Activated B cell treated with CpG ODN at 0.5 μM for 24 hours (primary cell): ENCODE measurements at regions of chr6 and their contacts with region 1.

Region 1: DNA sequence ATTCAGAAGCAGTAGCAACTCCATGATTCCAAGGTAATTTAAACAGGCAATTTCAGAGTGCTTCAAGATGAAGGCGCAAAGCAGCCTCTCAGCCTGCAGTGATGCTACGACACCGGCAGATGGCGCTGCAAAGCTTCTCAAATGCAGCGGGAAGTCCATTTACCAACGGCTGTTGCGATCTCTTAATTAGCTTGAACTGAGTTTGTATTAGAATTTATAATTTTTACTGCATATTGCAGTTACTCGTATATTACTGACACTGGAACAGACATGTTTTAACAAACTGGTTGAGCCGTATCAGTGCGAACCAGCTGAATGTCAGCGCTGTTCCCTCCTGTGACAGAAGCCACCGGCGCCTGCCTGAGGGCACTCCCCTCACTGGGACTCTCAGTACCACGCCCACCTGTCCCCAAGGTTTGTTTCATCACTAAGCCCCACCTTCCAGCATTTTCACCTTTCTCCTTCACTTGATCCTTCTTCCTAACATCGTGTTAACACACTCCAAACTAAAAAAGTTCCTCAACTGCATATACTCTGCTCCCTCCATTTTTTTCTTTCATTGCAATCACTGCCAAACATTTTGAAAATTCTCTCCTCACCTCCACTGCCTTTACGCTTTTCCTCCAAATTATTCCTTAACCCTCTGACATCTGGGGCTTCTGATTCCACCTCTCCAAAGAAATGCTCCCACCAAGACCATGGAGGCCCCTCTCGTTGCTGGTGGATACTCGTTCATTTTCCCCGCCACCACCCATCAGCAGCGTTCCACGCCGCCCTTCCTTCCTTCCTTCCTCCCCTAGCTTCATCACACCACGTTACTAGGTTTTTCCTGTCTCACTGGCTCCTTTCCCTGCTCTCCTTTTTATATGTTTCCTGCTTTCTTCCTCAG is 14.5 kb downstream of the GNL1 start:
- DNase-seq: peak; percentile 65
- ATAC-seq: peak; percentile 84
- H3K4me3 Mint-ChIP-seq: peak overlapping the region; percentile 81
- H3K27ac Mint-ChIP-seq: peak overlapping the region; percentile 81
- H3K4me1 Mint-ChIP-seq: peaks cover 30% of the 10 kb centered on the region
- H3K27me3 Mint-ChIP-seq: no peaks in the 10 kb centered on the region
- CTCF ChIP-seq: peak; percentile 98

Region 2: GRCh38 chr6:30418448-30418847 is 123.3 kb before region 1 on chr6:
- CTCF ChIA-PET with region 1: no interaction called
- POLR2A ChIA-PET with region 1: no interaction called
- intact Hi-C with region 1: no loop called
- DNase-seq: no peak
- ATAC-seq: no peak
- H3K4me3 Mint-ChIP-seq: no peak overlapping the region
- H3K27ac Mint-ChIP-seq: no peak overlapping the region
- H3K4me1 Mint-ChIP-seq: no peaks in the 10 kb centered on the region
- H3K27me3 Mint-ChIP-seq: peaks cover 51% of the 10 kb centered on the region
- CTCF ChIP-seq: no peak

Region 3: GRCh38 chr6:30483677-30484279 is 58.0 kb before region 1 on chr6:
- CTCF ChIA-PET with region 1: interaction called, 411 read pairs
- POLR2A ChIA-PET with region 1: interaction called, 97 read pairs
- intact Hi-C with region 1: loop called (anchors 1 kb)
- DNase-seq: no peak
- ATAC-seq: no peak
- H3K4me3 Mint-ChIP-seq: no peak overlapping the region
- H3K27ac Mint-ChIP-seq: no peak overlapping the region
- H3K4me1 Mint-ChIP-seq: peaks cover 33% of the 10 kb centered on the region
- H3K27me3 Mint-ChIP-seq: peaks cover 26% of the 10 kb centered on the region
- CTCF ChIP-seq: peak; percentile 58

Region 4: DNA sequence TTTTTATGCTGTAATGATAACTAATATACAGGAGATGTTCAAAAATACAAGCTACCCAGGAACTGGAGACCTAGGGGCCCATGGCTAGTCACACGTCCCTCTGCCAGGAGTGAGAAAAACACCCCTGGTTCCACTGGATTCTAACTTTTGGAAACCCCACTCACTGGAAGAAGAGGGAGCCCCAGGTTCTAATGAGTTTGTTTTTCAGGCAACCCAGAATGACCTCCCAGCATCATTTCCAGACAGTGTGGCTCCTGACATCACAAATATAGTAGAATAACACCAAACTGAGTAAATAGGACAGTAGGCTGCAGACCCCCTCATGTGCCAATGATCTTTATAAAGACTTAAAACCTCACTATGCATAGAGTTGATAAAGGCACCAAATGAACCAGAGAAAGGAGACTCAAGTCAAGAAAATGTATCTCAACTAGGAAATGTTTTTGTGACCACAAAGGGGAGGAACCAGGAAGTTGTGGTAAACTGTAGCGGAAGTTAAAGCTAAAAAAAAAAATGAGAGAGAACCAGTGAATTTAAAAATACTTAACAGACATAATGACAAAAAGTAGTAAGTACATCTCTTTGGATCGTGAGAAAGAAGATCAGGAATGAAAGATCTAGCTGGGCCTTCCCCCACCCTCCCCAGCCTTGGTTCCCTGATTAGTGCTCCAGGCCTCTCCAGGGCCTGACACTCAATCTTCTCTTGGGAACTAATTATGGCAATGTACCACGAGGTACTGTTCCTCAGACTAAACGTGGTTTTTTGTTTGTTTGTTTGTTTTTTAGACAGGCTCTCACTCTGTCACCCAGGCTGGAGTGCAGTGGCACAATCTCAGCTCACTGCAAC is 32.6 kb before region 1 on chr6:
- CTCF ChIA-PET with region 1: interaction called, 20 read pairs
- POLR2A ChIA-PET with region 1: interaction called, 14 read pairs
- intact Hi-C with region 1: no loop called
- DNase-seq: no peak
- ATAC-seq: peak; percentile 55
- H3K4me3 Mint-ChIP-seq: peak overlapping the region; percentile 75
- H3K27ac Mint-ChIP-seq: peak overlapping the region; percentile 90
- H3K4me1 Mint-ChIP-seq: peaks cover 73% of the 10 kb centered on the region
- H3K27me3 Mint-ChIP-seq: no peaks in the 10 kb centered on the region
- CTCF ChIP-seq: no peak

Region 5: DNA sequence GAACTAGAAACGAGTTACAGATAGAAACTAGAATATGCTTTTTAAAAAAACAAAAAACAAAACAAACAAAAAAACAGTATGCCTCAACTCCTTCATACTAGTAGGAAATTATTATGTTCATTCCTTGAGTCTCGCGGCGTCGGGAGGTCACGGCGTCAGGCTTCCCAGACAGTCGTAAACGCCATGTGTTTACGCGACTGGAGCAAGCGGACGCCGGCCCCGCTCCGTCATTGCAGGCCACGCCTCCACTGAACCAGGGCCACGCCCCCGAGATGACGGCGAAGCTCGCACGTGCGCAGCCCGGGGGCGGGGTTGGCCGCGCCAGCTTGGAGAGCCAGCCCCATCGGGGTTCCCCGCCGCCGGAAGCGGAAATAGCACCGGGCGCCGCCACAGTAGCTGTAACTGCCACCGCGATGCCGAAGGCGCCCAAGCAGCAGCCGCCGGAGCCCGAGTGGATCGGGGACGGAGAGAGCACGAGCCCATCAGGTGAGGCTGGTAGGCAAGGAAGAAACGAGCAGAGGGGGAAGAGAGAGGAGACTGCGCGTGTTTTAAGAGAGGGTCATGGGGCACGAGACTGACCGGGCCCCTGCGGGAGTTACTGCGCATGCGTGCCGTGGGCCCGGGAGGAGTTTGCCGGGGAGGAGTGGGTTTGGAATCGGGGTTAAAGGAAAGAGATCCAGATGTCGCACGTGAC is 29.5 kb after region 1 on chr6 and contains the start of gene ABCF1:
- CTCF ChIA-PET with region 1: interaction called, 12 read pairs
- POLR2A ChIA-PET with region 1: interaction called, 7 read pairs
- intact Hi-C with region 1: no loop called
- DNase-seq: peak; percentile 100
- ATAC-seq: peak; percentile 95
- H3K4me3 Mint-ChIP-seq: peak within 1 kb of the TSS; percentile 99
- H3K27ac Mint-ChIP-seq: peak within 1 kb of the TSS; percentile 96
- H3K4me1 Mint-ChIP-seq: peaks cover 53% of the 10 kb centered on the region
- H3K27me3 Mint-ChIP-seq: no peaks in the 10 kb centered on the region
- CTCF ChIP-seq: no peak
- total RNA-seq, gene ABCF1: 93.7 and 94.5 TPM in 2 replicates

Region 6: GRCh38 chr6:30672445-30673253 is 130.9 kb after region 1 on chr6 and contains the start of gene DHX16:
- CTCF ChIA-PET with region 1: interaction called, 6 read pairs
- POLR2A ChIA-PET with region 1: interaction called, 3 read pairs
- intact Hi-C with region 1: loop called (anchors 1 kb)
- DNase-seq: peak; percentile 80
- ATAC-seq: peak; percentile 88
- H3K4me3 Mint-ChIP-seq: peak within 1 kb of the TSS; percentile 91
- H3K27ac Mint-ChIP-seq: peak within 1 kb of the TSS; percentile 84
- H3K4me1 Mint-ChIP-seq: peaks cover 42% of the 10 kb centered on the region
- H3K27me3 Mint-ChIP-seq: no peaks in the 10 kb centered on the region
- CTCF ChIP-seq: peak; percentile 51
- total RNA-seq, gene DHX16: 42.3 and 50.4 TPM in 2 replicates

Region 7: DNA sequence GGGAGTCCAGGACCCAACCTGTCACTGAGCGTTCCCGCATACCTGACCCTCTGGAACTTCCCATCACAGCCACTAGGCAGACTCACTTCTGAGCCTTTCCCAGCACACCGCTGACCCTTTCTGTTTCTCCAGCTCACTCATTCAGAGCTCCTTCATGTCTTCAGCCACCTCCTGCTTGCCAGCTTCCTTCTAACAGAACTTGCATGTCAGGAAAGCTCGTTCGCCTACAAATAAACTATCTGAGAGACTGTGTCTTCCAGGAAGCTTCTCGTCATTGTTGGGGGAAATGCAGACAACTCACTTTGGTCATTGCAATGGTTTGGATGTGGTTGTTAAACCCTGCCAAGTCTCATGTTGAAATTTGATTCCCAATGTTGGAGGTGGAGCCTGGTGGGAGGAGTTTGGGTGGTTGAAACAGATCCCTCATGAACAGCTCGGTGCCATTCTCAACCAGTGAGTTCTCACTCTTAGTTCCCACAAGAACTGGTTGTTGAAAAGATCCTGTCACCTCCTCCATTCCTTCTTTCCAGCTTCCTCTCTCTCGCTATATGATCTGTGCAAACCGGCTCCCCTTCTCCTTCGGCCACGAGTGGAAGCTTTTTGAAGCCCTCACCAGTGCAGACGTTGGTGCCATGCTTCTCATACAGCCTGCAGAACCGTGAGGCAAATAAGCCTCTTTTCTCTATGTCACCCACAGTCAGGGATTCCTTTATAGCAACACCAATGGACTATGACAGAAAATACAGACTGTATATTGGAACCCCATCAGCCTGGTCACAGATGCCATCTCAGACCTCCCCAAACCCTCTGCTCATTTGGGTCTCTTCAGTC is 440.4 kb after region 1 on chr6:
- CTCF ChIA-PET with region 1: no interaction called
- POLR2A ChIA-PET with region 1: no interaction called
- intact Hi-C with region 1: no loop called
- DNase-seq: no peak
- ATAC-seq: no peak
- H3K4me3 Mint-ChIP-seq: no peak overlapping the region
- H3K27ac Mint-ChIP-seq: no peak overlapping the region
- H3K4me1 Mint-ChIP-seq: peaks cover 7% of the 10 kb centered on the region
- H3K27me3 Mint-ChIP-seq: peaks cover 43% of the 10 kb centered on the region
- CTCF ChIP-seq: no peak

Region 8: GRCh38 chr6:31087494-31088089 is 545.8 kb after region 1 on chr6:
- CTCF ChIA-PET with region 1: interaction called, 5 read pairs
- POLR2A ChIA-PET with region 1: no interaction called
- intact Hi-C with region 1: loop called (anchors 10 kb)
- DNase-seq: peak; percentile 67
- ATAC-seq: peak; percentile 96
- H3K4me3 Mint-ChIP-seq: no peak overlapping the region
- H3K27ac Mint-ChIP-seq: no peak overlapping the region
- H3K4me1 Mint-ChIP-seq: peaks cover 4% of the 10 kb centered on the region
- H3K27me3 Mint-ChIP-seq: peaks cover 17% of the 10 kb centered on the region
- CTCF ChIP-seq: peak; percentile 37